GM12878 (cell line): ENCODE measurements at regions of chr6 and their contacts with region 1.

Region 1: DNA sequence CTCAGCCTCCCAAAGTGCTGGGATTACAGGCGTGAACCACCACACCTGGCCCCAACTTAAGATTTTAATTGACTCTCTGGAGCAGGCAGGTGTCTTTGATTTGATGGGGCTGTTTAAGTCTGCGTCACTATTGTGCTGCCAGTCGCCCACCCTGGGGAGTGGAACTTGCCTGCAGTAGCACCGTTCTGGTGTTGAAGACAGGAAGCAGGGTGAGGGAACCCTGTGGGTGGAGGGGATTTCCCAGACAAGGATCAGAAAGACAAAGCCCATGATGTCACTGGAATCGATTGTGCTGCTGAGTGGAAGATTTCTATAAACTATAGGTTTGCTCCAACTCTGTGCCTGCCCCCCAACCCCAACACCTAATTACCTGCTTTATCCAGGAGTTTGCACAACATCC is 11.0 kb downstream of the ALDH8A1 start:
- DNase-seq: peak; percentile 13
- ATAC-seq: peak; percentile 85
- H3K4me3 ChIP-seq: no peak overlapping the region
- H3K27ac ChIP-seq: no peak overlapping the region
- H3K4me1 ChIP-seq: peaks cover 6% of the 10 kb centered on the region; the same call in 1 of the 2 replicates
- H3K27me3 ChIP-seq: no peaks in the 10 kb centered on the region
- CTCF ChIP-seq: no peak
- EP300 ChIP-seq: no peak
- POLR2A ChIP-seq: no peak
- RAD21 ChIP-seq: no peak

Region 2: GRCh38 chr6:134123666-134124208 is 815.2 kb before region 1 on chr6:
- CTCF ChIA-PET with region 1: interaction called, 56 read pairs
- POLR2A ChIA-PET with region 1: no interaction called
- RAD21 ChIA-PET with region 1: interaction called, 23 read pairs
- SMC1A ChIA-PET with region 1: interaction called, 25 read pairs
- in situ Hi-C with region 1: no loop called
- intact Hi-C with region 1: loop called (anchors 5 kb)
- DNase-seq: peak; percentile 12
- ATAC-seq: peak; percentile 70
- H3K4me3 ChIP-seq: no peak overlapping the region
- H3K27ac ChIP-seq: no peak overlapping the region
- H3K4me1 ChIP-seq: no peaks in the 10 kb centered on the region
- H3K27me3 ChIP-seq: no peaks in the 10 kb centered on the region
- CTCF ChIP-seq: peak; percentile 57 to 58 (median 58)
- EP300 ChIP-seq: no peak
- POLR2A ChIP-seq: no peak
- RAD21 ChIP-seq: peak; percentile 39

Region 3: GRCh38 chr6:134166511-134167261 is 772.2 kb before region 1 on chr6:
- CTCF ChIA-PET with region 1: interaction called, 21 read pairs
- POLR2A ChIA-PET with region 1: no interaction called
- RAD21 ChIA-PET with region 1: interaction called, 6 read pairs
- SMC1A ChIA-PET with region 1: interaction called, 6 read pairs
- in situ Hi-C with region 1: loop called (anchors 5 kb)
- intact Hi-C with region 1: no loop called
- DNase-seq: no peak
- ATAC-seq: no peak
- H3K4me3 ChIP-seq: no peak overlapping the region
- H3K27ac ChIP-seq: no peak overlapping the region
- H3K4me1 ChIP-seq: no peaks in the 10 kb centered on the region
- H3K27me3 ChIP-seq: no peaks in the 10 kb centered on the region
- CTCF ChIP-seq: no peak
- EP300 ChIP-seq: no peak
- POLR2A ChIP-seq: no peak
- RAD21 ChIP-seq: no peak

Region 4: GRCh38 chr6:134757911-134758361 is 181.0 kb before region 1 on chr6:
- CTCF ChIA-PET with region 1: no interaction called
- POLR2A ChIA-PET with region 1: no interaction called
- RAD21 ChIA-PET with region 1: no interaction called
- SMC1A ChIA-PET with region 1: no interaction called
- in situ Hi-C with region 1: no loop called
- intact Hi-C with region 1: no loop called
- DNase-seq: no peak
- ATAC-seq: no peak
- H3K4me3 ChIP-seq: no peak overlapping the region
- H3K27ac ChIP-seq: no peak overlapping the region
- H3K4me1 ChIP-seq: no peaks in the 10 kb centered on the region
- H3K27me3 ChIP-seq: peaks cover 0 to 3% of the 10 kb centered on the region in 2 experiments; a peak in 1 of 4 replicates
- CTCF ChIP-seq: no peak
- EP300 ChIP-seq: no peak
- POLR2A ChIP-seq: no peak
- RAD21 ChIP-seq: no peak

Region 5: DNA sequence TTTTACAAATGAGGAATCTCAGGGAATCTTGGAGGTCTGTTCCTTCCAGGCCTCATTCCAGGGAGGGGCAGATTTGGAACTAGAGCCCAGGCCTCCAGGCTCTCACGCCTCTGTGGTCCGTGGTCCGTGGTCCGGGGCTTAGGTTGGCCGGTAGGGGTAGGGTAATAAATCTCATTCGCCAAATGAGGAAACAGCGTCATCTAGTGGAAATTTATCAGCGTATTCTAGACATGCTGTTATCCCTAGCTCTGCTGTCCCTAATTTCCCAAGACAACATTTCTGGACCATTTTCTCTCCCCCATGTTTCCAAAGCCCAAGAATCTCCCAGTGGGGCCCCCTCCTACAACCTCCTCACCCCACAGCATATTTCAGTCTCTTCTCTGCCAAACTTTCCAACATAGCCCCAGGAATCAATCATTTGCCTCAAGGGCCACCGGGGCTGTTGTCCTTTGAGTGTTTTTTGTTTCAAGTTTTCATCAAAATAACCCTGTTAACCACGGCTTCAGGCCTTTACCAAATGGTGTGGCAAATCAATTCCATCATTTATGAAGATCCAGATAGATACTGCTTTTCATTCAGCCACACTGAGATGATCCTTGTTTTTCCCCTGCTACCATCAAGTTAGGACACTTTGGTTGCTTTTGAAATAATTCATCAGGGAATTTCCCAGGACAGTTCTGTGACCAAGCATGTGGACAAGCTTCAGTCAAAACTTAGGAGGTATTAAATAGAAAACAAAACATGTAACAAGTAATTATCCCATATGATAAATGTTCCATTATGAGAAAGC is 115.8 kb before region 1 on chr6:
- CTCF ChIA-PET with region 1: interaction called, 38 read pairs
- POLR2A ChIA-PET with region 1: no interaction called
- RAD21 ChIA-PET with region 1: interaction called, 6 read pairs
- SMC1A ChIA-PET with region 1: interaction called, 20 read pairs
- in situ Hi-C with region 1: no loop called
- intact Hi-C with region 1: loop called (anchors 5 kb)
- DNase-seq: peak; percentile 36
- ATAC-seq: peak; percentile 95
- H3K4me3 ChIP-seq: no peak overlapping the region
- H3K27ac ChIP-seq: no peak overlapping the region
- H3K4me1 ChIP-seq: no peaks in the 10 kb centered on the region; the same call in 1 of the 2 replicates
- H3K27me3 ChIP-seq: no peaks in the 10 kb centered on the region
- CTCF ChIP-seq: peak; percentile 78 to 89 (median 80)
- EP300 ChIP-seq: no peak
- POLR2A ChIP-seq: no peak
- RAD21 ChIP-seq: peak; percentile 84

Region 6: DNA sequence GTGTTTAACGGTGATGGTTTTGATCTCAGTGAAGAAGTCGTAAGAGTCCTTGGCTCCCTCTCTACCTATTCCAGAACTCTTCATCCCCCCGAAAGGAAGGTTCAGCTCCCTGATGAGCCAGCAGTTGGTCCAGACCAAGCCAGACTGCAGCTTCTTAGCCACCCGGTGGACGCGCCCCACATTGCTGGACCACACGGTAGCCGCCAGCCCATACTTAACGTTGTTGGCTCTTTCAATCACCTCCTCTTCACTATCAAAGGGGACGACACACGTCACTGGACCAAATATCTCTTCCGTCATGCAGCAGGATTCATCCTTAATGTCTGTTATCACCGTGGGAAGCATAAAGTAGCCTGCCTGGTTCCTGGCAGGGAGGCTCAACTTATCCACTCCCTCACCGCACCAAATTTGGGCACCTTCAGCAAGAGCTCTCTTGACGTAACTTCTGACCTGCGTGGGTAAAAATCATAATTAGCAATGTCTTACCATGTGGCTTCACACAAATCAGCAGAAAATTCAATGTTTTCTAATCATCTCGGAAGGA is 20.4 kb before region 1 on chr6:
- CTCF ChIA-PET with region 1: interaction called, 22 read pairs
- POLR2A ChIA-PET with region 1: no interaction called
- RAD21 ChIA-PET with region 1: interaction called, 10 read pairs
- SMC1A ChIA-PET with region 1: interaction called, 8 read pairs
- in situ Hi-C with region 1: no loop called
- intact Hi-C with region 1: no loop called
- DNase-seq: no peak
- ATAC-seq: no peak
- H3K4me3 ChIP-seq: no peak overlapping the region
- H3K27ac ChIP-seq: no peak overlapping the region
- H3K4me1 ChIP-seq: no peaks in the 10 kb centered on the region
- H3K27me3 ChIP-seq: no peaks in the 10 kb centered on the region
- CTCF ChIP-seq: no peak
- EP300 ChIP-seq: no peak
- POLR2A ChIP-seq: no peak
- RAD21 ChIP-seq: no peak

Region 7: GRCh38 chr6:134962421-134962820 is 23.5 kb after region 1 on chr6:
- CTCF ChIA-PET with region 1: interaction called, 16 read pairs
- POLR2A ChIA-PET with region 1: no interaction called
- RAD21 ChIA-PET with region 1: interaction called, 3 read pairs
- SMC1A ChIA-PET with region 1: interaction called, 4 read pairs
- in situ Hi-C with region 1: no loop called
- intact Hi-C with region 1: no loop called
- DNase-seq: no peak
- ATAC-seq: no peak
- H3K4me3 ChIP-seq: no peak overlapping the region
- H3K27ac ChIP-seq: no peak overlapping the region
- H3K4me1 ChIP-seq: no peaks in the 10 kb centered on the region
- H3K27me3 ChIP-seq: no peaks in the 10 kb centered on the region
- CTCF ChIP-seq: no peak
- EP300 ChIP-seq: no peak
- POLR2A ChIP-seq: no peak
- RAD21 ChIP-seq: no peak

Region 8: GRCh38 chr6:135145063-135145800 is 206.3 kb after region 1 on chr6:
- CTCF ChIA-PET with region 1: interaction called, 17 read pairs
- POLR2A ChIA-PET with region 1: no interaction called
- RAD21 ChIA-PET with region 1: interaction called, 3 read pairs
- SMC1A ChIA-PET with region 1: interaction called, 4 read pairs
- in situ Hi-C with region 1: no loop called
- intact Hi-C with region 1: no loop called
- DNase-seq: no peak
- ATAC-seq: peak; percentile 75
- H3K4me3 ChIP-seq: 0 out of 2 replicates have a peak overlapping the region, but pooled peaks have one; percentile 18
- H3K27ac ChIP-seq: 0 out of 2 replicates have a peak overlapping the region, but pooled peaks have one; percentile 29
- H3K4me1 ChIP-seq: peaks cover 40% of the 10 kb centered on the region
- H3K27me3 ChIP-seq: no peaks in the 10 kb centered on the region
- CTCF ChIP-seq: peak; percentile 50 to 72 (median 65)
- EP300 ChIP-seq: no peak
- POLR2A ChIP-seq: no peak
- RAD21 ChIP-seq: peak; percentile 93

Region 9: DNA sequence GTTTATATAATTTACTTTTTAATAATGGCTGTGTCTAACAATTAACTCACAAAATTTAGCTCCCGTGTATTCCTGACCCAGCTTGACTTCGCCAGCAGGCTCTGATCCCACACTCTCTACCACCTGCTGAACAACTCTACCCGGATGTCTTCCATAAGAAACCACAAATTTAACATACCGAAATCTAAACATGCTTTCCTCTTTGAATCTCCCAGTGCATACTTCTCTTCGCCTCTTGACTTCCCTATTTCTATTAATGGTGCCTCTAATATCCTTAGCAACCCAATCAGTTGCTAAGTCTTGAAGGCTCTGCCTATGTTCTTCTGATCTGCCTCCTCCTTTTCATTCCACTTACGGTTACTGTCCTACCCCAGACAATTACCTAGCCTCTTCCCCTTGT is 237.6 kb after region 1 on chr6:
- CTCF ChIA-PET with region 1: no interaction called
- POLR2A ChIA-PET with region 1: no interaction called
- RAD21 ChIA-PET with region 1: no interaction called
- SMC1A ChIA-PET with region 1: no interaction called
- in situ Hi-C with region 1: no loop called
- intact Hi-C with region 1: no loop called
- DNase-seq: no peak
- ATAC-seq: no peak
- H3K4me3 ChIP-seq: no peak overlapping the region
- H3K27ac ChIP-seq: peak overlapping the region; percentile 28; the same call in 1 of the 2 replicates
- H3K4me1 ChIP-seq: peaks cover 24% of the 10 kb centered on the region
- H3K27me3 ChIP-seq: no peaks in the 10 kb centered on the region
- CTCF ChIP-seq: no peak
- EP300 ChIP-seq: no peak
- POLR2A ChIP-seq: no peak
- RAD21 ChIP-seq: no peak